Activated CD4-positive, alpha-beta memory T cell treated with anti-CD3 and anti-CD28 coated beads for 36 hours (primary cell): ENCODE measurements at regions of chr19 and their contacts with region 1.

Region 1: DNA sequence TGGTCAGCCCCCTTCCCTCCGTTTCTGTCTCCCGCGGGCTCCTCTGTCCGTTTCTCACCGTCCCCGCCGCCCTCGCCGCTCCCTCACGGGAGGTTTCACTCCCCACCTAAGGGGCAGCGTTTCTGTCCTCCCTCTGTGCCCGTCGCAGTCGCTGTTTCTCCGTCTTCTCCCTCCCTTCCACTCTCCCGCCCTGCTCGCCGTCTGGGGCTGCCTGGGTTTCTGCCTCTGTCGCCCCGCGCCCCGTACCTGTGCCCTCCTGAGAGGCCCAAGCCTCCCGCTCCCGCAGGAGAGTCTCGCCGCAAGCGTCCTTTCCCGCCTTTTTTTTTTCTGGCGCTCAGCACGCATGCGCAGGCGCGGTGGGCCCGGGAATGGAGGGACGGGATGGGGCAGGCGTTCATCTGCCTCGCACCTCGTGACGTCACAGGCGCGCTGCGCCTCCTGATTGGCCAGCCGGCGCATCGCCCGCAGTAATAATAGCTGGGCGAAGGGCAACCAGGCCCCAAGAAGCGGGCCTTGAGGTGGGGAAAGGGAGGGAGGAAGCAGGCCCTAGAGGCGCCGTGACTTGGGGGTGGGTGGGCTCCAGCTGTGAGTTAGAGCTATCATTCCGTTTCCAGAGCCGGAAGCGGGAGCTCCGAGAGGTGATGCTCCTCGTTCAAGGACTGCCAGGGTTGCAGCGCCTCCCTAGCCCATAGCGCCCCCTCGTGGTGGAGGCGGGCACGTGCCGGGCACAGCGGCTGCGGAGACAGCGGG is 15.4 kb downstream of the SSC5D start:
- DNase-seq: peak; percentile 94
- H3K4me3 Mint-ChIP-seq: peak overlapping the region; percentile 69
- H3K27ac Mint-ChIP-seq: peak overlapping the region; percentile 78
- H3K4me1 Mint-ChIP-seq: peaks cover 18% of the 10 kb centered on the region
- H3K27me3 Mint-ChIP-seq: peaks cover 5% of the 10 kb centered on the region

Region 2: DNA sequence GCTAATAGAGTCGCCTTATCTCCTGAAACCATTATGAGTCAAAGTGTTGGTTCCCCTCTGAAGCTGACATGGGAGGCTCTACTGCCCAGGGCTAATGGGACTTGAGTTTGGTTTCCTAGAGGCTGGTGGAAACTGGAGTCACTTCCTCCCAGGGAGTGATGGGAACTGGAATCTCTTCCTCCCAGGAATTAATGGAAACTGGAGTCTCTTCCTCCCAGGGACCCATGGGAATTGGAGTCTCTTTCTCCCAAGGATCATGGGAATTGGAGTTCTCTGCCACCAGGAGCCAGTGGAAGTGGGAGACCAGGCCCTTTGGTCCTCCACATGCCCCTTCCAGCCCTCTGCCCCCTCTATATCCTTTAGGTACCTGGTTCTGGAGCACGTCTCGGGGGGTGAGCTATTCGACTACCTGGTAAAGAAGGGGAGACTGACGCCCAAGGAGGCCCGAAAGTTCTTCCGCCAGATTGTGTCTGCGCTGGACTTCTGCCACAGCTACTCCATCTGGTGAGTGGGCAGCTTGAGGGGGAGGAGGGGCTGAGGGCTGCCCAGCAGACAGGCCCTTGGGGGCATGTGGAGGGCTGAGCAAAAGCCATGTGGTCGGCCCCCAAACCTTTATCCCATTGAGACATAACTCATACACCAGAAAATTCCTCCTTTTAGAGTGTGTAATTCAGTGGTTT is 214.4 kb before region 1 on chr19:
- CTCF ChIA-PET with region 1: interaction called, 11 read pairs
- POLR2A ChIA-PET with region 1: no interaction called
- intact Hi-C with region 1: no loop called
- DNase-seq: no peak
- H3K4me3 Mint-ChIP-seq: no peak overlapping the region
- H3K27ac Mint-ChIP-seq: no peak overlapping the region
- H3K4me1 Mint-ChIP-seq: no peaks in the 10 kb centered on the region
- H3K27me3 Mint-ChIP-seq: no peaks in the 10 kb centered on the region

Region 3: GRCh38 chr19:55452749-55453346 is 50.8 kb before region 1 on chr19:
- CTCF ChIA-PET with region 1: interaction called, 14 read pairs
- POLR2A ChIA-PET with region 1: no interaction called
- intact Hi-C with region 1: no loop called
- DNase-seq: peak; percentile 52
- H3K4me3 Mint-ChIP-seq: no peak overlapping the region
- H3K27ac Mint-ChIP-seq: no peak overlapping the region
- H3K4me1 Mint-ChIP-seq: peaks cover 7% of the 10 kb centered on the region
- H3K27me3 Mint-ChIP-seq: peaks cover 22% of the 10 kb centered on the region

Region 4: GRCh38 chr19:55467236-55468053 is 36.2 kb before region 1 on chr19:
- CTCF ChIA-PET with region 1: interaction called, 93 read pairs
- POLR2A ChIA-PET with region 1: no interaction called
- intact Hi-C with region 1: loop called (anchors 1 kb)
- DNase-seq: peak; percentile 73
- H3K4me3 Mint-ChIP-seq: no peak overlapping the region
- H3K27ac Mint-ChIP-seq: no peak overlapping the region
- H3K4me1 Mint-ChIP-seq: peaks cover 3% of the 10 kb centered on the region
- H3K27me3 Mint-ChIP-seq: no peaks in the 10 kb centered on the region

Region 5: GRCh38 chr19:55484593-55485438 is 18.9 kb before region 1 on chr19 and contains the start of gene NAT14:
- CTCF ChIA-PET with region 1: interaction called, 26 read pairs
- POLR2A ChIA-PET with region 1: interaction called, 5 read pairs
- intact Hi-C with region 1: no loop called
- DNase-seq: peak; percentile 67
- H3K4me3 Mint-ChIP-seq: peak within 1 kb of the TSS; percentile 71
- H3K27ac Mint-ChIP-seq: no peak within 1 kb of the TSS
- H3K4me1 Mint-ChIP-seq: peaks cover 17% of the 10 kb centered on the region
- H3K27me3 Mint-ChIP-seq: no peaks in the 10 kb centered on the region
- total RNA-seq, gene NAT14: 8.5 to 12.9 TPM

Region 6: DNA sequence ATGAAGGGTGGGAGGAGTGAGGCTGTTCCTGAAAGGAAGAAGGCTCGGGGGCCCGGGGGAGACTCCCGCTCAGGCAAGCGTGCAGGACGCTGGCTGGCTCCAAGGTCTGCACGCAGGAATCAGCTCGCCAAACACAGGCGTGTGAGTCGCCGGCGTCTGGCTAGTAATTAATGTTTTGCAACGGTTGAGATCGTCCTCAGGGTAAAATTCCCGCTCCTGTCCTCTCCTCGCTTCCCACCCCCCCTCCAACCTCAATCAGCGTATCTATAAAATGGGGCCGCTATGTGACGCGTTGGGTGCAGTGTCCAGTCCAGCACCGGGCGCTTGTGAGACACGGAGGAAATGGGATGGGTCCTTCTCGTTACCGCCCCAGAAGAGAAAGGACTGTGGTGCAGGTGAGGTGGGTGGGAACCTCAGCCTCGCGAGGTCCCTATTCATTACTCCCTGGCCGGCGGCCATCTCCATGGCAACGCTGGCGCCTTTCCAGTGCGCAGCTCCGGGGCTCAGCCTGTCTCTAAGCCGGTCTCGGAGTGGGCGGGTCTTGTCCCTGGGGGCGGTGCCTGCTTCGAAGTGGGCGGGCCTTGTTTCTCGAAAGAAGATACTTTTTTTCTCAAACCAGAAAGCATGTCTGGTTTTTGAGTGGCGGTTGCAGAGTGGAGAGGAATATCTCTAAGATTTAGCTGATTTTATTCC is 83.4 kb after region 1 on chr19:
- CTCF ChIA-PET with region 1: interaction called, 12 read pairs
- POLR2A ChIA-PET with region 1: no interaction called
- intact Hi-C with region 1: no loop called
- DNase-seq: peak; percentile 96
- H3K4me3 Mint-ChIP-seq: peak overlapping the region; percentile 75
- H3K27ac Mint-ChIP-seq: no peak overlapping the region
- H3K4me1 Mint-ChIP-seq: peaks cover 19% of the 10 kb centered on the region
- H3K27me3 Mint-ChIP-seq: no peaks in the 10 kb centered on the region

Region 7: GRCh38 chr19:55632463-55632834 is 128.8 kb after region 1 on chr19:
- CTCF ChIA-PET with region 1: interaction called, 36 read pairs
- POLR2A ChIA-PET with region 1: interaction called, 3 read pairs
- intact Hi-C with region 1: no loop called
- DNase-seq: peak; percentile 88
- H3K4me3 Mint-ChIP-seq: no peak overlapping the region
- H3K27ac Mint-ChIP-seq: no peak overlapping the region
- H3K4me1 Mint-ChIP-seq: peaks cover 39% of the 10 kb centered on the region
- H3K27me3 Mint-ChIP-seq: no peaks in the 10 kb centered on the region

Region 8: DNA sequence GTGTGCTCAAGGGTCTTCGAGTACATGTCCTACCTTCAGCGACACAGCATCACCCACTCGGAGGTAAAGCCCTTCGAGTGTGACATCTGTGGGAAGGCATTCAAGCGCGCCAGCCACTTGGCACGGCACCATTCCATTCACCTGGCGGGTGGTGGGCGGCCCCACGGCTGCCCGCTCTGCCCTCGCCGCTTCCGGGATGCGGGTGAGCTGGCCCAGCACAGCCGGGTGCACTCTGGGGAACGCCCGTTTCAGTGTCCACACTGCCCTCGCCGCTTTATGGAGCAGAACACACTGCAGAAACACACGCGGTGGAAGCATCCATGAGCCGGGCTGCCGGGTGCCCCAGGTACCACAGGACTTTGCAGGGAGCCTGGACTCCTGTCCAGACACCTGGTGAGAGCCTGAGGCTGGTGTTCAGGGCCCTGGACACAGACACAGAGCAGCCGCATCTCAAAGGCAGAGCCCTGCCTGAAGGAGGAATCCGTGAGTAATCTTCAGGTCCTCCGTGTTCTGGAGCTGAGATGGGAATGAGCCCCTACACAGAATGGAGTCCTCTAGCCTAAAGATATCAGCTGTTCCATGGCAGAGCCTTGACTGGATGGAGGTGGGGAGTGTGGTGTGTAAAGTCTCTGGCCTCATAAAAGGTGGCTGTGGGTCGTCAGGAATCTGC is 141.3 kb after region 1 on chr19:
- CTCF ChIA-PET with region 1: no interaction called
- POLR2A ChIA-PET with region 1: no interaction called
- intact Hi-C with region 1: no loop called
- DNase-seq: no peak
- H3K4me3 Mint-ChIP-seq: peak overlapping the region; percentile 85
- H3K27ac Mint-ChIP-seq: peak overlapping the region; percentile 98
- H3K4me1 Mint-ChIP-seq: peaks cover 47% of the 10 kb centered on the region
- H3K27me3 Mint-ChIP-seq: no peaks in the 10 kb centered on the region

Region 9: DNA sequence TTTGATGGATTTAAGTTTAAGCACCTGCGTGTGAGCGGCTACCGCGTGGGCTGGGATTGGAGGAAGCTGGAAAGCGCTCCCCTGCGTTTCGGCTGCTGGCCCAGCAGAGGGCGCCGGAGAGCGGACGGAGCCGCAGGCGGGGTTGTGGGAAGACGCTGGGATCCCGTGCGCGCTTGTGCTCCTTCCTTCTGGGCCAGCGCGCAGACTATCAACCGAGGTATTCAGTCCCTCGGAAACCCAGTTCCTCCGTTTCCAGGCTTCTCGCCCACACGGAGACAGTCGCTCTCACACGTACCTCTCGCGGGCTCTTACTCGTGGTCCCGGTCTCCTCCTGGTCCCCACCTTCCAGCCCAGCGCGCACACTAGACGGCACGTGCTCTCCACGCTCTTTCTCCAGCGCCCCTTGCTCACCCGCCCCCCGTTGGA is 200.1 kb after region 1 on chr19:
- CTCF ChIA-PET with region 1: no interaction called
- POLR2A ChIA-PET with region 1: no interaction called
- intact Hi-C with region 1: no loop called
- DNase-seq: peak; percentile 63
- H3K4me3 Mint-ChIP-seq: no peak overlapping the region
- H3K27ac Mint-ChIP-seq: no peak overlapping the region
- H3K4me1 Mint-ChIP-seq: no peaks in the 10 kb centered on the region
- H3K27me3 Mint-ChIP-seq: no peaks in the 10 kb centered on the region